Dorsolateral prefrontal cortex (tissue), 120 donors: ENCODE measurements at regions of chr11 and their contacts with region 1.

Region 1: GRCh38 chr11:12235947-12236743 is 125.8 kb downstream of the MICAL2 start:
- DNase-seq: peak in 1 of 10 donors; percentile 70
- H3K4me3 ChIP-seq: no peak overlapping the region
- H3K27ac ChIP-seq: peak overlapping the region in 55 of 59 donors; percentile 13 to 89 (median 68)
- H3K27me3 ChIP-seq: no peaks in the 10 kb centered on the region
- CTCF ChIP-seq: peak; percentile 59 to 89 (median 80)

Region 2: GRCh38 chr11:12052676-12053605 is 183.2 kb before region 1 on chr11:
- intact Hi-C with region 1: loop called (anchors 5 kb)
- DNase-seq: peak in 5 of 10 donors; percentile 42 to 77 (median 48)
- H3K4me3 ChIP-seq: no peak overlapping the region
- H3K27ac ChIP-seq: peak overlapping the region in 6 of 59 donors; percentile 5 to 45 (median 16)
- H3K27me3 ChIP-seq: no peaks in the 10 kb centered on the region
- CTCF ChIP-seq: no peak

Region 3: GRCh38 chr11:12087075-12088004 is 148.8 kb before region 1 on chr11:
- intact Hi-C with region 1: loop called in 1 of 2 experiments (anchors 2 kb)
- DNase-seq: no peak
- H3K4me3 ChIP-seq: no peak overlapping the region
- H3K27ac ChIP-seq: peak overlapping the region in 52 of 59 donors; percentile 8 to 92 (median 67)
- H3K27me3 ChIP-seq: peaks cover 0 to 4% (median 0%) of the 10 kb centered on the region in 45 donors
- CTCF ChIP-seq: no peak

Region 4: GRCh38 chr11:12110201-12110713 is 125.9 kb before region 1 on chr11 and contains the start of gene MICAL2:
- intact Hi-C with region 1: loop called in 1 of 2 experiments (anchors 10 kb)
- DNase-seq: peak; percentile 68 to 94 (median 86)
- H3K4me3 ChIP-seq: peak within 1 kb of the TSS; percentile 64 to 90 (median 80)
- H3K27ac ChIP-seq: peak within 1 kb of the TSS in 57 of 59 donors; percentile 2 to 91 (median 77)
- H3K27me3 ChIP-seq: no peaks in the 10 kb centered on the region
- CTCF ChIP-seq: peak in 21 of 56 donors; percentile 9 to 46 (median 28)
- total RNA-seq, gene MICAL2: 104 to 402 (median 289) TPM

Region 5: DNA sequence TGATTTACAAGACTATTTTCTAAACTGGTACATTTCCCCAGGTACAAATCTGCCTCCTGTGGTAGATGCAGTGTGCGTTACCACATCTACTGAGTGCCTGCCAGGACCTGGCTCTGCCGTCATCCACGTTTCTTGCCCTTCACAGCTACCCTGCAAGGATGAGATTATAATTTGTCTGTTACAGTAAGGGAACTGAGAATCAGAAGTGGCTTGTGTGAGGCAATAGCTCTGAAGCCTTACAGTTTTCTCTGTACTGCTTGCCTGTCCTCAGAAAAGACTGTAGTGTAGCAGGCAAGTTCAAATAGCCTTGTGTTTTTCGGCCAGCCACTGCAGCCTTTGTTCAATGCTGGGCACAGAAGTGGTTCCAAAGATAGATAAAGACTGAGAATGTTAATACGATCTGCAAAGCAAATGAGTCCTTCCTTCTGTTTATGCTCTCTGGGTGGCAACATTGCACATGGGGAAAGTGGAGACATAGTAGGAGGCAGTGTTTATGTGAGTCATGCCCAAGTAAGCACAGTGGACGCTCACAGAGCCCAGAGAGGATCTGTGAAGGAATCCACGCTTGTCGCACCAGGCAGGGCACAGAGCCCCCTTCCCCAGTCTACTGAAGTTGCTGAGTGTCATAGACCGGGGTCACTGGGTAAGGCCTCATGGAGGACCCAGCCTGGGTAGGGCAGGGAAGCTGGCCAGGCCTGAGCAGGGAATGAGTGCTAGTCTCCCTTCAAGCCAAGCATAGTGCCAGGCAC is 76.6 kb before region 1 on chr11:
- intact Hi-C with region 1: loop called in 1 of 2 experiments (anchors 5 kb)
- DNase-seq: peak in 6 of 10 donors; percentile 41 to 76 (median 59)
- H3K4me3 ChIP-seq: peak overlapping the region in 17 of 59 donors; percentile 0 to 33 (median 12)
- H3K27ac ChIP-seq: peak overlapping the region in 58 of 59 donors; percentile 59 to 94 (median 84)
- H3K27me3 ChIP-seq: no peaks in the 10 kb centered on the region
- CTCF ChIP-seq: peak in 23 of 56 donors; percentile 3 to 49 (median 24)

Region 6: GRCh38 chr11:12281571-12282478 is 45.7 kb after region 1 on chr11:
- intact Hi-C with region 1: loop called in 1 of 2 experiments (anchors 5 kb)
- DNase-seq: peak; percentile 83 to 96 (median 92)
- H3K4me3 ChIP-seq: no peak overlapping the region
- H3K27ac ChIP-seq: no peak overlapping the region
- H3K27me3 ChIP-seq: peaks cover 0 to 9% (median 0%) of the 10 kb centered on the region in 45 donors
- CTCF ChIP-seq: peak; percentile 95 to 100 (median 99)

Region 7: GRCh38 chr11:12343526-12343925 is 107.4 kb after region 1 on chr11:
- intact Hi-C with region 1: no loop called
- DNase-seq: no peak
- H3K4me3 ChIP-seq: no peak overlapping the region
- H3K27ac ChIP-seq: no peak overlapping the region
- H3K27me3 ChIP-seq: peaks cover 0 to 12% (median 0%) of the 10 kb centered on the region in 45 donors
- CTCF ChIP-seq: no peak